PC-3 (cell line): ENCODE measurements at regions of chr3 and their contacts with region 1.

Region 1: GRCh38 chr3:12648384-12648959 is 15.4 kb downstream of the RAF1 start:
- DNase-seq: no peak
- ATAC-seq: no peak
- H3K4me3 ChIP-seq: no peak overlapping the region
- H3K27ac ChIP-seq: no peak overlapping the region
- H3K4me1 ChIP-seq: 0 out of 2 replicates have a peak, but pooled peaks cover 5% of the 10 kb centered on the region
- H3K27me3 ChIP-seq: no peaks in the 10 kb centered on the region
- CTCF ChIP-seq: no peak

Region 2: GRCh38 chr3:12638105-12638504 is 10.4 kb before region 1 on chr3:
- CTCF ChIA-PET with region 1: no interaction called
- POLR2A ChIA-PET with region 1: interaction called, 16 read pairs
- intact Hi-C with region 1: no loop called
- DNase-seq: peak; percentile 75
- ATAC-seq: peak; percentile 97
- H3K4me3 ChIP-seq: no peak overlapping the region
- H3K27ac ChIP-seq: no peak overlapping the region
- H3K4me1 ChIP-seq: peaks cover 12% of the 10 kb centered on the region
- H3K27me3 ChIP-seq: no peaks in the 10 kb centered on the region
- CTCF ChIP-seq: no peak

Region 3: DNA sequence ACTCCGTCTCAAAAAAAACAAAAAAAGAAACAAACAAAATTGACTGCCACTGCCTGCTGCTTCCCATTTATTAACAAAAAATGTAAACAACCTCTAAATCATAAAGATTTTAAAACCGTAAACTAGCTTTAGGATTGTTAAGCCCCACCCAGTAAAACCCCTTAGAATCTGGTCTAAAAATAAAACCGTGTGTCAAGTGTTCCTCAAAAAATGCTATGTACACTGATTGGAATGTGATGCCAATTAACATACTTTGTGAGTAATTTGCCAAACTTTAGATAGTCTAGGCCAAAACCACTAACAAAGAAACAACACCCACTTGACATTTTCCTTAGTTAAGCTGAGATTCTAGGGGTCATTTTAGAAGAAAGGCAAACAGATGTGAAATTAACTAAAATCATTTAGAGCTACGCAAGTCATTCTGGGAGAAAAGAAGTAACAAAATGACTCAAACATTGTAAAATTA is 10.2 kb after region 1 on chr3:
- CTCF ChIA-PET with region 1: no interaction called
- POLR2A ChIA-PET with region 1: no interaction called
- intact Hi-C with region 1: loop called (anchors 2 kb)
- DNase-seq: peak; percentile 50
- ATAC-seq: no peak
- H3K4me3 ChIP-seq: no peak overlapping the region
- H3K27ac ChIP-seq: no peak overlapping the region
- H3K4me1 ChIP-seq: peaks cover 30% of the 10 kb centered on the region
- H3K27me3 ChIP-seq: no peaks in the 10 kb centered on the region
- CTCF ChIP-seq: no peak

Region 4: DNA sequence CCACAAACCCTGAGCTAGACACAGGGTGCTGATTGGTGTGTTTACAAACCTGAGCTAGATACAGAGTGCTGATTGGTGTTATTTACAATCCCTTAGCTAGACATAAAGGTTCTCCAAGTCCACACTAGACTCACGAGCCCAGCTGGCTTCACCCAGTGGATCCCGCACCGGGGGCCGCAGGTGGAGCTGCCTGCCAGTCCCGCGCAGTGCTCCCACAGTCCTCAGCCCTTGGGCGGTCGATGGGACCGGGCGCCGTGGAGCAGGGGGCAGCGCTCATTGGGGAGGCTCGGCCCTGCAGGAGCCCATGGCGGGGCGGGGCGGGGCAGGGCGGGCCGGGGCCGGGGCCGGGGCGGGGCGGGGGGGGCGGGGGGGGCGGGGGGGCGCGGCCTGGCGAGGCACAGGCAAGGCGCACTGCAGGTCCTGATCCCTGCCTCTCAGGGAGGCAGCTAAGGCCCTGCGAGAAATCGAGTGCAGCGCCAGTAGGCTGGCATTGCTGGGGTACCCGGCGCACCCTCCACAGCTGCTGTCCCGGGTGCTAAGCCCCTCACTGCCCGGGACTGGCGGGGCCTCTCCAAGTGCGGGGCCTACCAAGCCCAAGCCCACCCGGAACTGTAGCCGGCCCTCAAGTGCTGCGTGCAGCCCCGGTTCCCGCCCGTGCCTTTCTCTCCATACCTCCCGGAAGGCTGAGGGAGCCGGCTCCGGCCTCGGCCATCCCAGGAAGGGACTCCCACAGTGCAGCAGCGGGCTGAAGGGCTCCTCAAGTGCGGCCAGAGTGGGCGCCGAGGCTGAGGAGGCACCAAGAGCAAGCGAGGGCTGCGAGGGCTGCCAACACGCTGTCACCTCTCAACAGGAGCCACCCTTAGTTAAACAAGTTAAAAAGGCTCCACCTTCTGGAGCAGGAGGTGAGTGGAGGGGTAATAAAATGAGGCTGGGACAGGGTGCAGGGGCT is 120.4 kb after region 1 on chr3:
- CTCF ChIA-PET with region 1: no interaction called
- POLR2A ChIA-PET with region 1: no interaction called
- intact Hi-C with region 1: no loop called
- DNase-seq: no peak
- ATAC-seq: no peak
- H3K4me3 ChIP-seq: no peak overlapping the region
- H3K27ac ChIP-seq: no peak overlapping the region
- H3K4me1 ChIP-seq: no peaks in the 10 kb centered on the region
- H3K27me3 ChIP-seq: no peaks in the 10 kb centered on the region
- CTCF ChIP-seq: no peak